A549 (cell line): ENCODE measurements at regions of chr12 and their contacts with region 1.

Region 1: DNA sequence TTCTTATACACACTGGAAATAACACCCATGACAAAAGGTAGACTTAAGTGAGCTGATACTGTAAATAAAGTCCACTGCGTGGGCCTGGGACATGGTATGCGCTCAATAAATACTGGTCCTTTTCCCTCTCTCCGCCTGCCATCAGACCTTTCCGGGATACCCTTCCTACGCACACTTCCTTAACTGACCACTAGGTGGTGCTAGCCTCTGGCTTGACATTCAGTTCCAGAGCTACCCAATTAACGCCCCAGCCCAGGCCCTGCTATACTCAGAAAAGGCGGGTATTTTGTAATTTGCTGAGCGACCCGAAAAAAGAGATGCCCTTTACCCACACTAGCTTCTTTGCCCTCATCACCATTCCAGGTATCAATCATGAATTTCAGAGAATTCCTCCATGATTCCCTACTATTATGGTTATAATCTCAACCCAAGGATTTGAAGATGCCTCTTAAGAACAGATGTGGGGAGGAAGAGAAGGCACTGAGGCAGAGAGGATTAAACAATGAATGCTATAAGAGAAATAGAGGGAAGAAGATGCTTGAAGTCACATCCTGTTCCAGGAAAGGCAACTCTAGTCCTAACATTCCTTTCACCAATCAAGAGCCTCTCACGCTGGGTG is 3.9 kb upstream of the LRP1 start:
- DNase-seq: peak; percentile 77 to 84
- ATAC-seq: peak; percentile 46 to 61; a peak in 3 of 6 replicates
- H3K4me3 ChIP-seq: no peak overlapping the region
- H3K27ac ChIP-seq: no peak overlapping the region
- H3K4me1 ChIP-seq: peaks cover 10% of the 10 kb centered on the region; the same call in 2 of the 3 replicates
- CTCF ChIP-seq: peak; percentile 94
- EP300 ChIP-seq: no peak
- POLR2A ChIP-seq: no peak
- RAD21 ChIP-seq: peak; percentile 86 to 92

Region 2: DNA sequence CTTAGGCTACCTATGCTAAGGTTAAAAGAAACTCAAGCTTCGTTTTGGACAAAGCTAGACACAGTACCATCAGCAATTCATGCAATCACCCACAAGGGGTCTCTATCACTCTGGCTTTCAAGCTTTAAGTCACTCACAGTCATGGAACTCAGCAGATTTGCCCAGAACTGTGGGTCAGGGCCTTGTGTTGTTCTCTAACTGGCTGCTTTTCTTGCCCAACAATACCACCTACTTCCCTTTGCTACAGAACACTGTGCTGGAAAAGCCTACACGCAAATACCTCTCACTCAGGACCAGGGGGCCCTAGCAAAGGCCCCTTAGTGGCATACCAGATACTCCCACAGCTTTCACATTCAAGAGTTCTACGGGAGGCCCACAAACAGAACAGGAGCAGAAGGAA is 54.8 kb before region 1 on chr12:
- CTCF ChIA-PET with region 1: interaction called, 50 read pairs
- POLR2A ChIA-PET with region 1: interaction called, 4 read pairs
- DNase-seq: peak; percentile 48 to 86
- ATAC-seq: peak; percentile 99
- H3K4me3 ChIP-seq: no peak overlapping the region
- H3K27ac ChIP-seq: peak overlapping the region in 1 of 2 experiments; percentile 68; a peak in 3 of 6 replicates
- H3K4me1 ChIP-seq: 0 out of 3 replicates have a peak, but pooled peaks cover 4% of the 10 kb centered on the region
- CTCF ChIP-seq: peak; percentile 94
- EP300 ChIP-seq: no peak
- POLR2A ChIP-seq: no peak
- RAD21 ChIP-seq: peak; percentile 94 to 97

Region 3: DNA sequence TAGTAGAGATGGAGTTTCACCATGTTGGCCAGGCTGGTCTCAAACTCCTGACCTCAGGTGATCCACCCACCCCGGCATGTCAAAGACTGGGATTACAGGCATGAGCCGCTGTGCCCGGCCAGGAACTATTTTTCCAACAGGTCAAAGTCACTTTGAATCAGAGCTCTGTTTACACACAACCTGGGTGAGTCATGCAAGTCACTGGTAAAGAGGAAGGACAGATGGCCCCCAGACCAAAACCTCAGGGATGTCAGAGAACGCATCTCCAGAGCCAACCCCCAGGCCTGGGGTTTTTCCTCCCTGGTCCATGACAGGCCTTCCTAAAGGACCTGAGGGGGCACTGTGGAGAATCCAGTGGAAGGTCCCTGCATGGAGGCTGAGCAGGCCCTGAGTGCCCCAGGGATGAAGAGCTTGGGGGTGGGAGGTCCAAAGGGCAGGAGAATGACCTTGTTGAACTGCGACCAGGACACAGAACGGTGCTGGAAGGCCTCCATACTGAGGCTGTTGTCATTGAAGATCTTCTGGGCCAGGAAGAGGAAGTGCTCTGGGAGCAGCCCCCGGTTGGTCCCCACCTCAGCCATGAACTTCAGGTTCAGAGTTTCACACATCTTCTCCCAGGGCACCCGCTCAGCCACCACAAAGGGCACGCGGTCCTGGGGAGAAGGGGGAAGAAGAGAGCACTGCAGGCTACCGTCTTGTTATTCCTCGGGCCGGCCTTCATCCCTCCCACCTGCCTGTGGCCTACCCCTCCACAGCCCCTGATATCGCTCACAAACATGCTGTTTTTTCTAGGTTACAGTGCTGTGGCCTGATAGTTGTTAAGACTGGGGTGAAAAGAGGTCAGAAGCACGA is 22.3 kb before region 1 on chr12:
- CTCF ChIA-PET with region 1: interaction called, 16 read pairs
- POLR2A ChIA-PET with region 1: no interaction called
- DNase-seq: peak; percentile 66 to 74
- ATAC-seq: peak; percentile 58 to 65
- H3K4me3 ChIP-seq: no peak overlapping the region
- H3K27ac ChIP-seq: peak overlapping the region; percentile 13 to 68; a peak in 4 of 6 replicates
- H3K4me1 ChIP-seq: peaks cover 19% of the 10 kb centered on the region
- CTCF ChIP-seq: no peak
- EP300 ChIP-seq: no peak
- POLR2A ChIP-seq: no peak
- RAD21 ChIP-seq: no peak

Region 4: GRCh38 chr12:57142121-57142520 is 17.8 kb after region 1 on chr12:
- CTCF ChIA-PET with region 1: interaction called, 54 read pairs
- POLR2A ChIA-PET with region 1: no interaction called
- DNase-seq: no peak
- ATAC-seq: no peak
- H3K4me3 ChIP-seq: no peak overlapping the region
- H3K27ac ChIP-seq: no peak overlapping the region
- H3K4me1 ChIP-seq: peaks cover 16% of the 10 kb centered on the region
- CTCF ChIP-seq: no peak
- EP300 ChIP-seq: no peak
- POLR2A ChIP-seq: no peak
- RAD21 ChIP-seq: no peak

Region 5: DNA sequence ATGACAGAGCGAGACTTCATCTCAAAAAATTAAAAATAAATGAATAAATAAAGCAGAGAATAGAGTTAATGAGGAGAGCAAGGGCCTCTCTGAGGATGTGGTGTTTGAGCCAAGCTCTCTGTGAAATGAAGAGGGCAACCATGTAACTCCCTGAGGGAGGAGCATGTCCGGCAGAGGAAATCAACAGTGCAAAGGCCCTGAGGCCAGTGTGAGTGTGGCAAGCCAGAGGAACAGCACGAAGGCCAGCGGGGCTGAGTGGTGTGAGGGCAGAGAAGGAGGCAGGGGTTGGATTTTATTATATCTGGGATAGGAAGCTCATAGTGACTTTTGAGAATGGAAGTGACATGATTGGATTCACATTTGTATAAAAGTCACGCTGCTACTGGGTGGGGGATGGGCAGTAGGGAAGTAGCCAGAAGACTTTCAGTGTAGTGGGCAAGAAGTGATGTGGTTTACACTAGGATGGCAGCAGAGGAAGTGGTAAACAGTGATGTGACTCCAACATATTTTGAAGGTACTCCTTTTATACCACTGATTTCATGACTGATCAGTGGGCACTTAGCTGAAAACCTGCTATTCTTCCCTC is 33.3 kb after region 1 on chr12:
- CTCF ChIA-PET with region 1: interaction called, 41 read pairs
- POLR2A ChIA-PET with region 1: interaction called, 4 read pairs
- DNase-seq: no peak
- ATAC-seq: no peak
- H3K4me3 ChIP-seq: no peak overlapping the region
- H3K27ac ChIP-seq: no peak overlapping the region
- H3K4me1 ChIP-seq: no peaks in the 10 kb centered on the region
- CTCF ChIP-seq: no peak
- EP300 ChIP-seq: no peak
- POLR2A ChIP-seq: no peak
- RAD21 ChIP-seq: no peak

Region 6: DNA sequence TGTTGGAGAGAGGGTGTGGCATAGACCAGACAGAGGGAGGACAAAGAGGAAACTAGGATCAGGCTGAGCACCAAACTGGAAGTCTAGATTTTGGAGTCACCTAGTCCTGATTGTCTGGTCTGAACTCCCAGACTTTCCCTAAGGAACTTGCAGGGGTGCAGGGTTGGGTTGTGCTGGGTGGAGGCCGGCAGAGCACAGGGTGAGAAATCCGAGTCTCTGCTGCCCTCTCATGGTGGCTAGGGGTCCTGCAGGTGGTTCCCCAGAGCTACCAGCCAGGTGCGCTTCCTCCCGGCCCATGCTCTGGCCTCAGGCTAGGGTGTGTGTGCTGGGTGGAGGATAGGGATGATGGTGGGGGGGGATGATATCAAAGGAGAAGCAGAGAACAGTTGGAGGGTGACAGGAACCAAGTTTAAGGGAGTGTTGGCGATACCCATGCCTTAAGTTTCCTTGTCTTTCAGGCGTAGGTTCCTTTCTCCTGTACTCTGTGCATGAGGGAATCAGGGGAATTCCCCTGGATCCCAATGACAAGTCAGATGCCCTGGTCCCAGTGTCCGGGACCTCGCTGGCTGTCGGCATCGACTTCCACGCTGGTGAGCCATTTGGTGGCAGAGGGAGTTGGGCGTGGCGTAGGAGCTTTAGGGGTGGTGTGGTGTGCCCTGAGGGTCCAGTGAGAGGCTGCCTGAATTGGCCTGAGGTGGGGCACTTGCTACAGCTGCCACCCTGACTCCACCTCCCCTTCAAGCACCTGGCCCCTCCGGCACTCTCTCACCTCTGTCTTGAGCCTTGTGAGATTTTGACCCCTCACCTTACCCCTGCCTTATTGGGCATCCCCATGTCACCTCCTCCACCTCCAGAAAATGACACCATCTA is 58.8 kb after region 1 on chr12:
- CTCF ChIA-PET with region 1: interaction called, 1,152 read pairs
- POLR2A ChIA-PET with region 1: interaction called, 4 read pairs
- DNase-seq: peak; percentile 73 to 94
- ATAC-seq: peak; percentile 79 to 95
- H3K4me3 ChIP-seq: no peak overlapping the region
- H3K27ac ChIP-seq: no peak overlapping the region
- H3K4me1 ChIP-seq: no peaks in the 10 kb centered on the region
- CTCF ChIP-seq: peak; percentile 85
- EP300 ChIP-seq: no peak
- POLR2A ChIP-seq: no peak
- RAD21 ChIP-seq: peak; percentile 91

Region 7: DNA sequence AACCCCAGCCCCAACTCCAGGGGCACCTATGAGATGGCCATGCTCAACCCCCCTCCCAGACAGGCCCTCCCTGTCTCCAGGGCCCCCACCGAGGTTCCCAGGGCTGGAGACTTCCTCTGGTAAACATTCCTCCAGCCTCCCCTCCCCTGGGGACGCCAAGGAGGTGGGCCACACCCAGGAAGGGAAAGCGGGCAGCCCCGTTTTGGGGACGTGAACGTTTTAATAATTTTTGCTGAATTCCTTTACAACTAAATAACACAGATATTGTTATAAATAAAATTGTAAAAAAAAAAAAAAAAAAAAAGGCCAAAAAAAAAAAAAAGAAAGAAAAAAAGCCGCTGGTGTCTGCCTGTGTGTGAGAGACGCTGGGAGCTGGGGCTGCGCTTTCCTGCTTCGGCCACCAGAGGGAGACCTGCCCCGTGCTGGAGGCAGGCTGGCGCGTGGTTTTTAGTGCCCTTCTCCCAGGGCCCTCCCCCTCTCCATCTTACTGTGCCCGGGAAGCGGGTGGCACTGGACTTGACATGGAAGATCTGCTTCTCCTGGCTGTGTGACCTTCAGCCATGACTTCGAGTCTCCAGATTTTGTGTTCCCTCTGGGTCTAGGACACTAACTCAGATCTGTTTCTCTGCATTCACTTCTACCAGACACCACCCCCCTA is 88.8 kb after region 1 on chr12:
- CTCF ChIA-PET with region 1: interaction called, 11 read pairs
- POLR2A ChIA-PET with region 1: no interaction called
- DNase-seq: peak; percentile 89 to 94
- ATAC-seq: peak; percentile 51 to 75
- H3K4me3 ChIP-seq: no peak overlapping the region
- H3K27ac ChIP-seq: peak overlapping the region in 1 of 2 experiments; percentile 67; a peak in 4 of 6 replicates
- H3K4me1 ChIP-seq: peaks cover 31% of the 10 kb centered on the region
- CTCF ChIP-seq: peak; percentile 90
- EP300 ChIP-seq: no peak
- POLR2A ChIP-seq: no peak
- RAD21 ChIP-seq: peak; percentile 78 to 85